IMR-90 (cell line): ENCODE measurements at regions of chr9 and their contacts with region 1.

Region 1: DNA sequence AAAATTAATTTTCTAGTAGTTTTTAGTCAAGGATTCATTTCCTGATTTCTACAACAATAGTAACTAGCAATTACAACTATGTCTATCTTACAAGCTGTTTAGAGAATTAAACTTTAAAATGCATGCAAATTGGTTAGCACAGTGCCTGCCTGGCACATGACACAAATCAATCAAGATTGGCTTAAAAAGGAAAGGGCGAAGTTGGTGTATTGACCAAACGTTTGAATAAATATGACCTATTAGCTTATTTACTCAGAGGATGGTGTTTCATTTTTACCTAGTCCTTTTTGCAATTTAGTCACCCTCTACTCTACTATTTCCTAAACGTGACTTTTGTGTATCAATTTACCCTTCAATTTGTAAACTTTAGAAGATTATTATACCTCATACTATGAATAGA is 83.5 kb downstream of the GDA start:
- DNase-seq: no peak
- ATAC-seq: no peak
- H3K4me3 ChIP-seq: no peak overlapping the region
- H3K27ac ChIP-seq: no peak overlapping the region
- H3K4me1 ChIP-seq: no peaks in the 10 kb centered on the region
- H3K27me3 ChIP-seq: no peaks in the 10 kb centered on the region; the same call in 1 of the 2 replicates
- CTCF ChIP-seq: no peak
- POLR2A ChIP-seq: no peak
- RAD21 ChIP-seq: no peak

Region 2: GRCh38 chr9:72983512-72984225 is 750.9 kb after region 1 on chr9:
- CTCF ChIA-PET with region 1: no interaction called
- POLR2A ChIA-PET with region 1: no interaction called
- dilution Hi-C with region 1: no loop called
- in situ Hi-C with region 1: no loop called
- intact Hi-C with region 1: loop called (anchors 10 kb)
- DNase-seq: no peak
- ATAC-seq: no peak
- H3K4me3 ChIP-seq: no peak overlapping the region
- H3K27ac ChIP-seq: no peak overlapping the region
- H3K4me1 ChIP-seq: no peaks in the 10 kb centered on the region
- H3K27me3 ChIP-seq: no peaks in the 10 kb centered on the region
- CTCF ChIP-seq: no peak
- POLR2A ChIP-seq: no peak
- RAD21 ChIP-seq: no peak